ENCODE measurements at regions of chr7 and their contacts with region 1.

Region 1: GRCh38 chr7:34675749-34676374 is 17.8 kb downstream of the NPSR1 start:
- DNase-seq: peak; percentile 37
- H3K4me3 ChIP-seq: no peak overlapping the region
- H3K27ac ChIP-seq: no peak overlapping the region
- H3K4me1 ChIP-seq: peaks cover 0 to 4% of the 10 kb centered on the region in 2 experiments; a peak in 1 of 4 replicates
- H3K27me3 ChIP-seq: peaks cover 2% of the 10 kb centered on the region; the same call in 1 of the 2 replicates
- CTCF ChIP-seq: peak; percentile 83
- EP300 ChIP-seq: no peak
- RAD21 ChIP-seq: peak; percentile 48

Region 2: GRCh38 chr7:34596892-34597291 is 79.0 kb before region 1 on chr7:
- CTCF ChIA-PET with region 1: no interaction called
- POLR2A ChIA-PET with region 1: no interaction called
- DNase-seq: peak; percentile 3
- H3K4me3 ChIP-seq: no peak overlapping the region
- H3K27ac ChIP-seq: no peak overlapping the region
- H3K4me1 ChIP-seq: no peaks in the 10 kb centered on the region
- H3K27me3 ChIP-seq: peaks cover 26% of the 10 kb centered on the region; the same call in 1 of the 2 replicates
- CTCF ChIP-seq: peak; percentile 53
- EP300 ChIP-seq: no peak
- RAD21 ChIP-seq: peak; percentile 56

Region 3: GRCh38 chr7:34662058-34662708 is 13.7 kb before region 1 on chr7:
- CTCF ChIA-PET with region 1: interaction called, 20 read pairs
- POLR2A ChIA-PET with region 1: no interaction called
- DNase-seq: no peak
- H3K4me3 ChIP-seq: no peak overlapping the region
- H3K27ac ChIP-seq: no peak overlapping the region
- H3K4me1 ChIP-seq: no peaks in the 10 kb centered on the region
- H3K27me3 ChIP-seq: peaks cover 50% of the 10 kb centered on the region
- CTCF ChIP-seq: no peak; the same call in 1 of the 2 replicates
- EP300 ChIP-seq: no peak
- RAD21 ChIP-seq: no peak

Region 4: GRCh38 chr7:34806831-34807230 is 131.0 kb after region 1 on chr7:
- CTCF ChIA-PET with region 1: no interaction called
- POLR2A ChIA-PET with region 1: no interaction called
- DNase-seq: no peak
- H3K4me3 ChIP-seq: no peak overlapping the region
- H3K27ac ChIP-seq: no peak overlapping the region
- H3K4me1 ChIP-seq: no peaks in the 10 kb centered on the region
- H3K27me3 ChIP-seq: peaks cover 14% of the 10 kb centered on the region; the same call in 1 of the 2 replicates
- CTCF ChIP-seq: no peak
- EP300 ChIP-seq: no peak
- RAD21 ChIP-seq: no peak

Region 5: DNA sequence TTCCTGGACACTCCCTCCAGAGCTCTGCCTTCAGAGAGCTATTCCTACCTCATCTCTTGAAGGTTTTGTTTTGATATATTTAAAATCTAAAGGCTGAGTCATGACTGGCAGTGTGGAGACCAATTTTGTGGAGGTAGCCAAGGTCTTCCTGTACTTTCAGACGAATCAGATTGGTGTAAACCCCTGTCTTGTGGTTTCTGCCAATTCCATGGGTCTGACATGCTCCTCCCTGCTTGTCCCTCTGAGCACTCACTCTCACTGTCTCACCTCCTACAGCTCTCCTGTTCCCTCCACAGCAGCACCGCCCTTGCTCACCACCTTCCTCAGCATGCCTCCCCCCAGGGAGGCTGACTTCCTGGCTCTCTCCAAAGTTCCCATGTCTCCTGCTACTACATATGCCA is 161.9 kb after region 1 on chr7:
- CTCF ChIA-PET with region 1: no interaction called
- POLR2A ChIA-PET with region 1: no interaction called
- DNase-seq: no peak
- H3K4me3 ChIP-seq: no peak overlapping the region
- H3K27ac ChIP-seq: no peak overlapping the region
- H3K4me1 ChIP-seq: peaks cover 0 to 5% of the 10 kb centered on the region in 2 experiments; a peak in 1 of 4 replicates
- H3K27me3 ChIP-seq: peaks cover 15% of the 10 kb centered on the region; the same call in 1 of the 2 replicates
- CTCF ChIP-seq: no peak
- EP300 ChIP-seq: no peak
- RAD21 ChIP-seq: no peak